B cell (primary cell): ENCODE measurements at regions of chr1 and their contacts with region 1.

Region 1: DNA sequence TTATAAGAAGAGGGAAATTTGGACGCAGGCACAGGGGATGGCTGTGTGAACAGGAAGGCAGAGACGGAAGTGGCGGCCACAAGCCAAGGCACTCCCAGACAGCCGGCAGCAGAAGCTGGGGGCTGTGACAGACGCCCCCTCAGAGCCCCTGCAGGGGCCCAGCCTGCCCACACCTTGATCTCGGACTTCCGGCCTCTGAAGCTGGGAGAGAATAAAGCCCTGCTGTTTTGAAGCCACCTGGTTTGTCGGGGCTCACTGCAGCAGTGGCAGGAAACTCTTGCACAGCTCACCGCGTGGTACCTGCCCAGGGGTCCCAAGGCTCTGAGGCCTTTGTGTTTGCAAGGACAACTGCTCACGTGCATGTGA is 13.7 kb downstream of the MEGF6 start:
- DNase-seq: peak; percentile 48
- ATAC-seq: peak; percentile 33
- H3K4me3 ChIP-seq: peak overlapping the region in 3 of 5 experiments; percentile 20 to 45 (median 30)
- H3K4me3 Mint-ChIP-seq: peak overlapping the region; percentile 85
- H3K27ac ChIP-seq: no peak overlapping the region
- H3K27ac Mint-ChIP-seq: peak overlapping the region; percentile 71
- H3K4me1 ChIP-seq: peaks cover 27 to 38% of the 10 kb centered on the region in 2 donors
- H3K4me1 Mint-ChIP-seq: peaks cover 24% of the 10 kb centered on the region
- H3K27me3 ChIP-seq: peaks cover 0 to 2% (median 0%) of the 10 kb centered on the region in 4 experiments
- H3K27me3 Mint-ChIP-seq: no peaks in the 10 kb centered on the region
- CTCF ChIP-seq: no peak

Region 2: GRCh38 chr1:3198371-3199271 is 399.0 kb before region 1 on chr1:
- CTCF ChIA-PET with region 1: no interaction called
- POLR2A ChIA-PET with region 1: no interaction called
- intact Hi-C with region 1: no loop called
- DNase-seq: no peak
- ATAC-seq: no peak
- H3K4me3 ChIP-seq: no peak overlapping the region
- H3K4me3 Mint-ChIP-seq: no peak overlapping the region
- H3K27ac ChIP-seq: no peak overlapping the region
- H3K27ac Mint-ChIP-seq: no peak overlapping the region
- H3K4me1 ChIP-seq: no peaks in the 10 kb centered on the region
- H3K4me1 Mint-ChIP-seq: no peaks in the 10 kb centered on the region
- H3K27me3 ChIP-seq: no peaks in the 10 kb centered on the region
- H3K27me3 Mint-ChIP-seq: no peaks in the 10 kb centered on the region
- CTCF ChIP-seq: no peak

Region 3: GRCh38 chr1:3577711-3578432 is 19.7 kb before region 1 on chr1:
- CTCF ChIA-PET with region 1: no interaction called
- POLR2A ChIA-PET with region 1: no interaction called
- intact Hi-C with region 1: loop called (anchors 1 kb)
- DNase-seq: no peak
- ATAC-seq: no peak
- H3K4me3 ChIP-seq: no peak overlapping the region
- H3K4me3 Mint-ChIP-seq: no peak overlapping the region
- H3K27ac ChIP-seq: no peak overlapping the region
- H3K27ac Mint-ChIP-seq: no peak overlapping the region
- H3K4me1 ChIP-seq: peaks cover 9 to 16% of the 10 kb centered on the region in 2 donors
- H3K4me1 Mint-ChIP-seq: peaks cover 7% of the 10 kb centered on the region
- H3K27me3 ChIP-seq: peaks cover 0 to 3% (median 0%) of the 10 kb centered on the region in 4 experiments
- H3K27me3 Mint-ChIP-seq: no peaks in the 10 kb centered on the region
- CTCF ChIP-seq: no peak

Region 4: GRCh38 chr1:3631330-3632262 is 34.0 kb after region 1 on chr1:
- CTCF ChIA-PET with region 1: no interaction called
- POLR2A ChIA-PET with region 1: no interaction called
- intact Hi-C with region 1: no loop called
- DNase-seq: no peak
- ATAC-seq: no peak
- H3K4me3 ChIP-seq: no peak overlapping the region
- H3K4me3 Mint-ChIP-seq: no peak overlapping the region
- H3K27ac ChIP-seq: no peak overlapping the region
- H3K27ac Mint-ChIP-seq: no peak overlapping the region
- H3K4me1 ChIP-seq: peaks cover 0 to 4% of the 10 kb centered on the region in 2 donors
- H3K4me1 Mint-ChIP-seq: peaks cover 7% of the 10 kb centered on the region
- H3K27me3 ChIP-seq: no peaks in the 10 kb centered on the region
- H3K27me3 Mint-ChIP-seq: no peaks in the 10 kb centered on the region
- CTCF ChIP-seq: no peak